ENCODE measurements at regions of chr16 and their contacts with region 1.

Region 1: GRCh38 chr16:86072328-86073102 is 173.6 kb downstream of the IRF8 start:
- DNase-seq: peak; percentile 61 to 91
- H3K4me3 ChIP-seq: no peak overlapping the region
- H3K27ac ChIP-seq: no peak overlapping the region
- H3K4me1 ChIP-seq: peaks cover 0 to 7% (median 4%) of the 10 kb centered on the region in 4 donors
- H3K27me3 ChIP-seq: peaks cover 0 to 28% (median 5%) of the 10 kb centered on the region in 3 donors
- CTCF ChIP-seq: peak in 5 of 7 experiments; percentile 24 to 73 (median 72)
- EP300 ChIP-seq: no peak
- POLR2A ChIP-seq: no peak

Region 2: DNA sequence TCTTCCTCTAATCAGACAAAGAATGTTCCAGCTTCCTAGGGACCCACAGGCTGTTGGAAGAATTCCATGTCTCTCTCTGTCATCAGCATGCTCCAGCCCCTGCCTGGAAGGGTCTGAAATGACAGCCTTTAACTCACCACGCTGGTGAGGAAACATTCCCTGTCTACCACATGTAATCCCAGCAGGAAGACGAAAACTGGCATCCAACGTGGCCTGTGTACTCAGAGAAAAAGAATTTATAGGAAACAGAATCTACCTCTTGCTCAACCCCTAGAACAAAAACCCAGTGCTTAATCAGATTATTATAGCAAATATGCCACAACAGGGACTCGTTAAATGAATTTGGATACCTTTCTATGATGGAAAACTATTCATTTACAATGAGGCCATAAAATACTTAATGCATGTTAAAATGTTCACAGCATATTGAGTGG is 290.6 kb after region 1 on chr16:
- intact Hi-C with region 1: no loop called
- DNase-seq: peak in 1 of 2 donors; percentile 40
- H3K4me3 ChIP-seq: no peak overlapping the region
- H3K27ac ChIP-seq: peak overlapping the region in 3 of 5 donors; percentile 7 to 74 (median 73)
- H3K4me1 ChIP-seq: peaks cover 0 to 25% (median 5%) of the 10 kb centered on the region in 4 donors
- H3K27me3 ChIP-seq: peaks cover 0 to 16% (median 3%) of the 10 kb centered on the region in 3 donors
- CTCF ChIP-seq: no peak
- EP300 ChIP-seq: peak; percentile 23
- POLR2A ChIP-seq: no peak

Region 3: DNA sequence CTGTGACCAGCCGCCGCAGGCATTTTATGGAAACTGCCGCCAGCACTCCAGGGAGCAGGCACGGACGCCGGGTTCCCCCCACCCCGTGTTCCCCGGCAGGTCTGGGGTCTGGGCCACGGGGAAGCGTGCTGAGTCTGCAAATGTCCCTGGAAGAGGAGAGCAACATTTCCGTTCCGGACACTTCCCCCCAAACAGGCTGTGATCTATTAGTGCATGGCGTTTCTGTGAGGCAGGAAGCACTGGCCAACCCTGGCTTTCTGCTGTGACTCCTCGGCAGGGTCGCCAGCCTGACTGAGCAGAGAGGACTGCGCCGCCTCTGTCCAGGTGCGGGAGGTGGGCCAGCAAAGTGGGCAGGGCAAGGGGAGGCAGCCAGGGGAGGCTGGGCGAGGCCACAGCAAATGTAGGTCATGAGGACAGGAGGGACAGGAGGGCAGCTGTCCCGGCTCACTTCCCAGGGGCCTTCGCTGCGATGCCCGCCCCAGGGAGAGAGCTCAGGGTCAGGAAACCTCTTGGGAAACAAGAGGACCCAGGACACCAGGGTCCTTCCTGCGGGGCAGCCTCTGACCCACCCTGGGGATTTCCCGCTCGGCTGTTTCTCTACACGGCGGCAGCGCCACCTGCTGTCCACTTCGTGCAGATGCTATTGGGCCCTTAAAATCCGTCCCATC is 447.3 kb after region 1 on chr16:
- intact Hi-C with region 1: loop called (anchors 5 kb)
- DNase-seq: peak; percentile 59 to 88
- H3K4me3 ChIP-seq: peak overlapping the region in 3 of 4 donors; percentile 6 to 28 (median 26)
- H3K27ac ChIP-seq: peak overlapping the region; percentile 47 to 99 (median 91)
- H3K4me1 ChIP-seq: peaks cover 9 to 37% (median 28%) of the 10 kb centered on the region in 4 donors
- H3K27me3 ChIP-seq: peaks cover 0 to 73% (median 60%) of the 10 kb centered on the region in 3 donors
- CTCF ChIP-seq: peak in 5 of 7 experiments; percentile 60 to 88 (median 70)
- EP300 ChIP-seq: no peak
- POLR2A ChIP-seq: no peak